Dendritic cell treated with granulocyte-macrophage colony-stimulating factor and Interleukin-4, amounts not matched to agents 40 ng/mL and 50 ng/mL, for 4 days (primary cell): ENCODE measurements at regions of chr14 and their contacts with region 1.

Region 1: DNA sequence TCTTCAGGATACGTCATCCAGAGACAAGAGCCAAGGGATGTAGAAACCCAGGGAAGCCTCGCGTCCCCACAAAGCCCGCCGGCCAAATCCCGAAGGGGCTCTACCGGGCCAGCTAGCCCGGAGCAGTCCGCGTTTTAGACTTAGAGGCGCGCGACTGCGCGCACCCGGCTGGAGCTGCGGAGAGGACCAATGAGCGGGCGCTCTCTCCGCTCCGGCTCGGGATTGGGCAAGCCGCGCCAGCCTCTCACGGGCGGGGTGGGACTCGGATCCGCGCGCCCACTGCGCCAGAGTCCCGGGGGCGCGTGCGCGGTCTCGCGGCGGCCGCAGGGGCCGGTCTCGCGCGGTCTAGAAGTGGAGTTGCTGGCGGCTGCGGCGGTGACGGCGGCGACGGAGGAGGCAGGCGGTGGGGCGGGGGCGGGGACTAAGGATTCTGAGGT is 239 bp upstream of the PALS1 start:
- H3K4me3 Mint-ChIP-seq: peak overlapping the region; percentile 94
- H3K27ac Mint-ChIP-seq: peak overlapping the region; percentile 95
- H3K4me1 Mint-ChIP-seq: peaks cover 24% of the 10 kb centered on the region
- H3K27me3 Mint-ChIP-seq: peaks cover 14% of the 10 kb centered on the region

Region 2: GRCh38 chr14:66507722-66508546 is 733.1 kb before region 1 on chr14 and contains the start of gene GPHN:
- intact Hi-C with region 1: loop called (anchors 5 kb)
- H3K4me3 Mint-ChIP-seq: peak within 1 kb of the TSS; percentile 88
- H3K27ac Mint-ChIP-seq: peak within 1 kb of the TSS; percentile 87
- H3K4me1 Mint-ChIP-seq: peaks cover 17% of the 10 kb centered on the region
- H3K27me3 Mint-ChIP-seq: peaks cover 22% of the 10 kb centered on the region

Region 3: GRCh38 chr14:67276131-67276530 is 35.1 kb after region 1 on chr14:
- intact Hi-C with region 1: loop called (anchors 5 kb)
- H3K4me3 Mint-ChIP-seq: no peak overlapping the region
- H3K27ac Mint-ChIP-seq: no peak overlapping the region
- H3K4me1 Mint-ChIP-seq: peaks cover 12% of the 10 kb centered on the region
- H3K27me3 Mint-ChIP-seq: no peaks in the 10 kb centered on the region

Region 4: GRCh38 chr14:67359775-67360648 is 119.0 kb after region 1 on chr14 and contains the starts of genes ATP6V1D and EIF2S1:
- intact Hi-C with region 1: loop called (anchors 2 kb)
- H3K4me3 Mint-ChIP-seq: peak within 1 kb of the TSS; percentile 95
- H3K27ac Mint-ChIP-seq: peak within 1 kb of the TSS; percentile 92
- H3K4me1 Mint-ChIP-seq: peaks cover 63% of the 10 kb centered on the region
- H3K27me3 Mint-ChIP-seq: no peaks in the 10 kb centered on the region